GM10248 (cell line): ENCODE measurements at regions of chr2 and their contacts with region 1.

Region 1: GRCh38 chr2:102703748-102704147 is 58.1 kb upstream of the TMEM182 start:
- DNase-seq: peak; percentile 23
- CTCF ChIP-seq: peak; percentile 49

Region 2: GRCh38 chr2:102615622-102616436 is 87.9 kb before region 1 on chr2:
- CTCF ChIA-PET with region 1: interaction called, 13 read pairs
- POLR2A ChIA-PET with region 1: no interaction called
- DNase-seq: peak; percentile 63
- CTCF ChIP-seq: peak; percentile 91

Region 3: GRCh38 chr2:102871707-102872106 is 168.0 kb after region 1 on chr2:
- CTCF ChIA-PET with region 1: no interaction called
- POLR2A ChIA-PET with region 1: no interaction called
- DNase-seq: no peak
- CTCF ChIP-seq: no peak